Caco-2 (cell line): ENCODE measurements at regions of chr5 and their contacts with region 1.

Region 1: GRCh38 chr5:79924936-79925893 is 65.8 kb downstream of the MTX3 start:
- DNase-seq: peak in 1 of 2 experiments; percentile 12
- H3K4me3 ChIP-seq: no peak overlapping the region
- H3K4me3 Mint-ChIP-seq: no peak overlapping the region
- H3K27ac Mint-ChIP-seq: no peak overlapping the region
- H3K4me1 ChIP-seq: no peaks in the 10 kb centered on the region
- H3K4me1 Mint-ChIP-seq: no peaks in the 10 kb centered on the region
- H3K27me3 ChIP-seq: no peaks in the 10 kb centered on the region
- H3K27me3 Mint-ChIP-seq: no peaks in the 10 kb centered on the region
- CTCF ChIP-seq: peak in 1 of 2 experiments; percentile 33

Region 2: DNA sequence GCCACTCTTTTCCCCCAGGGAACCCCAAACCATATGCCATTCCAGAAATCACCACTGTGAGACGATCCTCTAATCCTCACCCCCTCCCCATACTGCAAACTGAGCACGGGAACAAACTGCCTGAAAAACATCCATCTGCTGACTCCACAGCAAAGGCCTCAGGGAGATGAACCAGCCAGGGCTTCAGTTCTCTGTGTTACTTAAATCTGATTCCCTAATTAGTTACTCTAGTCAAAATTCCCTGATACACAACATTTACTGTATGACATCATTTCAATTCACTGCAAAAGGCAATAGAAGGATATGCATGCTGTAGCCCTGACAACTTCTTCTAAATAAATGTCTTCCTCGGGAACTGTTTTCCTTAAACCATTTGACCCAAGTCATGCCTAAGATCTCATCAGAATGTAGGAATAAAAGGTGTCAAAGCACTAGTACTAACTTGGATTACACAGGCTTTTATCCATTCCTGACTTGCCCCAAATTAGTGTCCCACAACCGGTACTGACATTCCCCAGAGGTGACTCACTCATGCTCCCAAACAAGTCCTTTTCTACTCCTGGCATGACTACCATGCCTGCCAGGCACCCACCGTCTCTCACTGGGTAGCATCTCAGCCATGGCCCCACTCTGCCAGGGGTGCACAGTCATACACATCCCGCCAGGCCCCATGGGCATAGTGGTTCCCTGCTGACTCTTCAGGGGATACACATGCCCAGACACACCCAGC is 30.9 kb after region 1 on chr5:
- CTCF ChIA-PET with region 1: no interaction called
- POLR2A ChIA-PET with region 1: no interaction called
- intact Hi-C with region 1: no loop called
- DNase-seq: no peak
- H3K4me3 ChIP-seq: no peak overlapping the region
- H3K4me3 Mint-ChIP-seq: no peak overlapping the region
- H3K27ac Mint-ChIP-seq: no peak overlapping the region
- H3K4me1 ChIP-seq: no peaks in the 10 kb centered on the region
- H3K4me1 Mint-ChIP-seq: no peaks in the 10 kb centered on the region
- H3K27me3 ChIP-seq: no peaks in the 10 kb centered on the region
- H3K27me3 Mint-ChIP-seq: no peaks in the 10 kb centered on the region
- CTCF ChIP-seq: no peak

Region 3: GRCh38 chr5:79999722-80000121 is 74.5 kb after region 1 on chr5:
- CTCF ChIA-PET with region 1: no interaction called
- POLR2A ChIA-PET with region 1: no interaction called
- intact Hi-C with region 1: loop called (anchors 2 kb)
- DNase-seq: no peak
- H3K4me3 ChIP-seq: no peak overlapping the region
- H3K4me3 Mint-ChIP-seq: no peak overlapping the region
- H3K27ac Mint-ChIP-seq: no peak overlapping the region
- H3K4me1 ChIP-seq: no peaks in the 10 kb centered on the region
- H3K4me1 Mint-ChIP-seq: no peaks in the 10 kb centered on the region
- H3K27me3 ChIP-seq: no peaks in the 10 kb centered on the region
- H3K27me3 Mint-ChIP-seq: peaks cover 16% of the 10 kb centered on the region
- CTCF ChIP-seq: no peak